ENCODE measurements at regions of chr9 and their contacts with region 1.

Region 1: GRCh38 chr9:123268240-123268949 is at the start of gene STRBP:
- DNase-seq: peak; percentile 92
- ATAC-seq: peak; percentile 98 to 99
- total RNA-seq, gene STRBP: 16.7 to 20.7 TPM

Region 2: GRCh38 chr9:123326662-123327093 is 58.3 kb after region 1 on chr9:
- intact Hi-C with region 1: no loop called
- DNase-seq: no peak
- ATAC-seq: no peak

Region 3: DNA sequence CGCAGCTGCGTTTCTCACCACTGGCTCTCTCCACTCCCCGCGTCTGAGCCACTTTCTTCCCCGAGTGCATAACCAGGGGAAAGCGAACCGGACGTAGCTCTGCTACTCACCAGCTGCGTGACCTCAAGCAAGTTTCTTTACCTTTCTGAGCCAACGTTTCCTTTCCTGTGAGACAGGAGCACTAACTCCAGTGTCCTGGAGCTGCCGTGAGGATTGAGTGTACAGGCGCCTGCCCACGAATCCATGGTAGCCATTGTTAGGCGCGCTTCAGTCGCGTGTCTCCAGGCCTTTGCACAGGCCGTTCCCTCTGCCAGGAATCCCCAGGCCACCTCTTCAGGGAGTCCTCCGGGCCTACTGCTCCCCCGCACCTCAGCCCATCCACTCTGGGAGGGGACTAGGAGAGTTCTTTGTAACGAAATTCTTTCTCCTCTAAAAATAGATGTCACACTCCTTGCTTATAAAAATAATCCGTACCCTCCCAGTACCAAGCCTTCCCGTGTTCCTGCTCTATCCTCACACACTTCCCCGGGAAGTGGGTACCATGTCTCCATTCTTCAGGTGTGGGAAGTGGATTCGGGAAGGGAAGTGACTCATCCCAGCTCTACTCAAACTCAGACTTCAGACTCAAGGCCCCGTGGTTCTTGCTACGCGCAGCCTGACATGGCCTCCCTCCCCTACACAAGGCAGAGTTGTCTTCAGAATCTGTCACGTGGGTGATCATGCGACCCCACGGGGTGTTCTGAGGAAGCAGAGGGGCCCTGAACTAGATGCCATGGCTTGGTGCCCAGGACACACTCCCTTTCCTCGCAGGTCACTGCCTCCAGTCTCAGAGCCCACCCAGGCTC is 71.5 kb after region 1 on chr9:
- intact Hi-C with region 1: loop called in 1 of 2 experiments (anchors 5 kb)
- DNase-seq: no peak
- ATAC-seq: peak; percentile 43 to 73

Measured in left cardiac atrium (tissue), 4 donors.